Dorsolateral prefrontal cortex (tissue), 120 donors: ENCODE measurements at regions of chr1 and their contacts with region 1.

Region 1: DNA sequence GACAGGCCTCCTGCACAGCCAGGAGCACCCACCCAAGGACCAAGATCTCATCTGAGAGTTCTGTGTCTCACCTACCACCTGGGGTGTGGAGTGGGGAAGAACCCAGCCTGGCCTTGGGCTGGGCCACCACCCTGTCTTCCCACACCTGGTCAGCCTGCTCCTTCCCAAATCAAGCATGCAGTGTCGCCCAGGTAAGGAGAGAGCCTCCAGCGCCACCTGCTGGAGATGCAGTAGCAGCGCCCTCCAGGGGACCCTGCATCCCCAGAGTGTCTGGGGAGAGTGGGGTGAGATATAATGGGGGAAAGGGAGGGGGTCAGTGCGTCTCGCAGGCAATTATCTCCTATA is 32.3 kb downstream of the KIAA2013 start:
- DNase-seq: peak in 7 of 10 donors; percentile 27 to 75 (median 46)
- H3K4me3 ChIP-seq: no peak overlapping the region
- H3K27ac ChIP-seq: no peak overlapping the region
- H3K27me3 ChIP-seq: peaks cover 0 to 22% (median 10%) of the 10 kb centered on the region in 45 donors
- CTCF ChIP-seq: peak; percentile 44 to 87 (median 78)

Region 2: DNA sequence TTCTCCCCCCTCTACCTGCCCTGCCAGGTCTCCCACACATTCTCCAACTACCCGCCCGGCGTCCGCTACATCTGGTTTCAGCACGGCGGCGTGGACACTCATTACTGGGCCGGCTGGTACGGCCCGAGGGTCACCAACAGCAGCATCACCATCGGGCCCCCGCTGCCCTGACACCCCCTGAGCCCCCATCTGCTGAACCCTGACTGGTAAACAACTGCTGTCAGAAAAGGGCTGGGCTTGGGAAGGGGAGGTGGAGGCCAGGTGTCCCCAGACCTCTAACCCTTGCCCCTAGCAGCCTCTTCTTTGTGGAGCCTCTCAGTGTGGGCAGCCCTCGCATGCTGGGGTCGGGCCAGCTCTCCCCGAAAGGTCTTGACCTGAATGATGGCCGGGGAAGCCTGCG is 232.8 kb before region 1 on chr1:
- intact Hi-C with region 1: loop called in 1 of 2 experiments (anchors 10 kb)
- DNase-seq: no peak
- H3K4me3 ChIP-seq: no peak overlapping the region
- H3K27ac ChIP-seq: no peak overlapping the region
- H3K27me3 ChIP-seq: no peaks in the 10 kb centered on the region
- CTCF ChIP-seq: no peak

Region 3: GRCh38 chr1:11858968-11859871 is 34.7 kb before region 1 on chr1:
- intact Hi-C with region 1: loop called in 1 of 2 experiments (anchors 5 kb)
- DNase-seq: no peak
- H3K4me3 ChIP-seq: peak overlapping the region in 2 of 59 donors; percentile 2 to 4
- H3K27ac ChIP-seq: no peak overlapping the region
- H3K27me3 ChIP-seq: peaks cover 0 to 43% (median 26%) of the 10 kb centered on the region in 45 donors
- CTCF ChIP-seq: peak in 1 of 56 donors; percentile 3